ENCODE measurements at regions of chr14 and their contacts with region 1.

Region 1: DNA sequence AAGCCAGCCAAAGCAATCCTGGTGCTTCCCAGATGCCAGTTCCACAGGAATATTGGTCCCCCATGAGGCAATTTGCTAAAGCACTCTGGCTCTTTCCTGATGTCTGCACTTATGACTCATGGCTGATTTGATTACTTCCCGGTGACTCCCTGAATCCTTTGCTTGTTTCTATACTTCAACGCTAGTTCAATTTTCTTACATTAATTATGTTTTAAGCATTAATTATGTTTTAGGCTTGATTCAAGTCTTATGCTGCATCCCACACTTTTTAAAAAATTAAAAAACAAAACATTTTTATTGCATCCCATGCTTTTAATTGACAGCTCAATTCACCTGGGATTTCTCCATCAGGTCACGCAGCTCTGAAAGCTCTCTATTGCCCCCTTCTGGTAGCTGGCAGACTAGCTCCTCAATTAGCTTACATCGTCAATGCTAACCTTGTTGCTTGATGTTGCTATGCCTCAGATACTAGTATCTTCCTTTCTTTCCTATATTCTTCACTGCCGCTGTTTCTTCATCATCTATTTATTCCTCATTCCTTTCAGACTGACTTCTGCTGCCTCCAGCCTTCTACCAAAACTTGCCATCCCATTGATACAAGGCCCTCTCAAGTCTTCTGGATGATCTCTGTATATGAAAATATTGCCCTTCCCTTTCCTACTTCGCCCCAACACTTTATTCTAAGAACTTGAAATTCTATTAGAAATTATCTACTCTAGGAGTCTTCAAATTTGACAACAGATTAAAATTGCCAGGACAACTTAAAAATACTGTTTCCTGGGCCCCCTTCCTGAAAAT is 32.0 kb downstream of the TSHR start:
- DNase-seq: peak; percentile 74
- ATAC-seq: peak; percentile 34
- H3K4me3 Mint-ChIP-seq: no peak overlapping the region
- H3K27ac Mint-ChIP-seq: no peak overlapping the region
- H3K4me1 Mint-ChIP-seq: no peaks in the 10 kb centered on the region
- H3K27me3 Mint-ChIP-seq: peaks cover 9% of the 10 kb centered on the region

Region 2: DNA sequence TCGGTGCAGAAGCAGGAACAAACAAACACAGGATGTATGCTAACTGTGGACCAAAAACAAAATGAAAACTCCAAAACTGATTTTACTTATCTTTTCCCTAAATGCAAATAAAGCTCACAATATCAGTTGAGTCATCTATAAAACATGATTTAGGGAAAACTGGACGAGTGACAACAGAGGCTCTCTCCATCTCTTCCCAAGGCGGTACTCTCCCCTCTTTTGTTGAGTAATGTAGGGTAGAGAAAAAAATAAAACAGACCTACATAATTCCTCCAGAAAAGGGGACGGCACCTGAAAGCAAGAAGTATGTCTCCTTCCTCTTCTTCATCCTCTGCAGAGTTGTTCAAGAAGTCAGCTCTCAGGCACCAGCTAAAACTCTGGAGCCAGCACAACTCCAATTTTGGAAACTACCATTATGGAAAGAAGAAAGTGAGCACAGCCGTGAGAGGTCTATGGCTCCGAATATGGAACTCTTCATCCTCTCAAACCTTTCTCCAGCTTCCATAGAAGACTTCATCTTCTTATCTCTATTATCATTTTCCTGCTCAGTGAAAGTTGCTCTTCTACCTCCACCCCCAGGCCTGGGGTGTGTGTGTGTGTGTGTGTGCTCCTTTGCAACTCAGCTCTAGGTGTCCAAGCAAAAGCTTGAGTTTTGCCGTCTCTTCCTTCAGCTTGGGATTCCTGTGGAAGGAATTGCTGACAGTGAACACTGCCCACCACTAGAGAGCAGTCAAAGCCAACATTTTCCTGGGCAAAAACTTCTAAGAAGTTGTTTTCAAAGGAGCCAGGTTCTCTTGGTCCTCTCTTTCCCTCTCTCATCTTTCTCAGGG is 931.6 kb before region 1 on chr14:
- CTCF ChIA-PET with region 1: interaction called, 3 read pairs
- POLR2A ChIA-PET with region 1: no interaction called
- intact Hi-C with region 1: loop called in 1 of 2 experiments (anchors 1 kb)
- DNase-seq: peak; percentile 6
- ATAC-seq: no peak
- H3K4me3 Mint-ChIP-seq: no peak overlapping the region
- H3K27ac Mint-ChIP-seq: no peak overlapping the region
- H3K4me1 Mint-ChIP-seq: no peaks in the 10 kb centered on the region
- H3K27me3 Mint-ChIP-seq: peaks cover 4% of the 10 kb centered on the region

Region 3: GRCh38 chr14:80587075-80587724 is 400.2 kb before region 1 on chr14:
- CTCF ChIA-PET with region 1: no interaction called
- POLR2A ChIA-PET with region 1: no interaction called
- intact Hi-C with region 1: loop called in 1 of 2 experiments (anchors 1 kb)
- DNase-seq: peak; percentile 18
- ATAC-seq: peak; percentile 92
- H3K4me3 Mint-ChIP-seq: no peak overlapping the region
- H3K27ac Mint-ChIP-seq: peak overlapping the region; percentile 47
- H3K4me1 Mint-ChIP-seq: peaks cover 20% of the 10 kb centered on the region
- H3K27me3 Mint-ChIP-seq: no peaks in the 10 kb centered on the region

Region 4: DNA sequence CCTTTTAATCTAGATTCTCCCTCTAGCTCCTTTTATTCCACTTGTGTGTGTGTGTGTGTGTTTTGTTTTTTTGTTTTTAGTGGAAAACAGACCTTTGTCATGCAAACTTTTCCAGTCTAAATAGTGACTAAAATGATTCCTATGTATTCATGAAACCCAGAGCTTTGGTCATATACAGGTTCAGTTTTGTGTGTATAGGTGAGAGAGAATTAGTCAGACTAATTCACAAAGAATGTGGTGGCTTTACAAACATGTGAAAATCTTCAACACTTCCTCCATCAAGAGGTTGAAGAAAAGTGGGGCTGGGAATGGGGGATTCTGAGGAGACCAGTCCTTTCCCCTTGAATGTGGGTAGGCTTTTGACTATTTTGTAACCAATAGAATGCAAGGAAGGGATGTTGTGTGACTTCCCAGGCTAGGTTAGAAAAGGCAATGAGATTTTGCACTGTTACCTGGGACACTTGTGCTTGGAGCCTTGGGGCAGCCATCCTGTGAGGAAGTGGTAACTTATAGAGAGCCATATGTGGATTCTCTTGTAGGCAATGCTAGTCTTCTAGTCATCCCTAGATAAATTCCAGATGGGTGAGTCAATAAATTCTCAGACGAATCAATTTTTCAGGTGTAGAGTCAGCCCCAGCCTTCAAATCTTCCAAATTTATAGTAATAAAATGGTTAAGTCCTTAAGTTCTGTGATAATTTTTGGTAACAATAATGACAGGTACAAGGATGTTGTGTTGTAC is 282.0 kb before region 1 on chr14:
- CTCF ChIA-PET with region 1: no interaction called
- POLR2A ChIA-PET with region 1: no interaction called
- intact Hi-C with region 1: no loop called
- DNase-seq: no peak
- ATAC-seq: no peak
- H3K4me3 Mint-ChIP-seq: no peak overlapping the region
- H3K27ac Mint-ChIP-seq: no peak overlapping the region
- H3K4me1 Mint-ChIP-seq: no peaks in the 10 kb centered on the region
- H3K27me3 Mint-ChIP-seq: no peaks in the 10 kb centered on the region

Region 5: GRCh38 chr14:80930836-80931389 is 56.5 kb before region 1 on chr14:
- CTCF ChIA-PET with region 1: interaction called, 12 read pairs
- POLR2A ChIA-PET with region 1: interaction called, 4 read pairs
- intact Hi-C with region 1: no loop called
- DNase-seq: peak; percentile 73
- ATAC-seq: peak; percentile 99
- H3K4me3 Mint-ChIP-seq: peak overlapping the region; percentile 50
- H3K27ac Mint-ChIP-seq: peak overlapping the region; percentile 85
- H3K4me1 Mint-ChIP-seq: peaks cover 33% of the 10 kb centered on the region
- H3K27me3 Mint-ChIP-seq: no peaks in the 10 kb centered on the region

Region 6: DNA sequence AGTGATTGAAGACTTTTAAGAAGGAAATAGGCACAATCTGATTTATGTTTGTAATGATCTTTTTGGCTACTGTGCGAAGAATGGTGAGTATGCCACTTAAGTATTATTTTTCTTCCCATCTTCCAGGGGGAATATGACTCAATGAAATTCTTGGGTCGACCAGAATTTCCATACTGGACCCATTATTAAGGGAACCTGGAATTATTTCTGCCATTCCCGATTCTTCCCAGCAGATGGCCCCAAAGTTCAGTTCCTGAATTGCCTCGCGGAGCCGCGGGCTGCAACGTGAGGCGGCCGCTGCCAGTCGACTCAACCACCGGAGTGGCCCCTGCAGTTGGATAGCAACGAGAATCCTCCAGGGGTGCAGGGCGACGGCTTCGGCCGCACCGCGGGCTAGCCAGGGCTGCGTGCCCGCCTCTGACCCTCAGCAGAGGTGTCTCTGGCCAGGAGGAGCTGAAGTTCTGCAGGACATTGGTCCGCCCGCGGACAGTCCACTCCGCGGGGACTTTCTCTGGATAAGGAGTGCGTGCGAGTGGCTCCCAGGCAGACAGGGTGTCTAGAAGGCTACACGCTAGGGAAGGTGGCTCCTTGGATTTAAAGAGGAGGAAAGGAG is 32.6 kb before region 1 on chr14:
- CTCF ChIA-PET with region 1: interaction called, 119 read pairs
- POLR2A ChIA-PET with region 1: interaction called, 6 read pairs
- intact Hi-C with region 1: loop called (anchors 1 kb)
- DNase-seq: peak; percentile 82
- ATAC-seq: peak; percentile 67
- H3K4me3 Mint-ChIP-seq: peak overlapping the region; percentile 75
- H3K27ac Mint-ChIP-seq: peak overlapping the region; percentile 72
- H3K4me1 Mint-ChIP-seq: peaks cover 41% of the 10 kb centered on the region
- H3K27me3 Mint-ChIP-seq: peaks cover 13% of the 10 kb centered on the region

Region 7: DNA sequence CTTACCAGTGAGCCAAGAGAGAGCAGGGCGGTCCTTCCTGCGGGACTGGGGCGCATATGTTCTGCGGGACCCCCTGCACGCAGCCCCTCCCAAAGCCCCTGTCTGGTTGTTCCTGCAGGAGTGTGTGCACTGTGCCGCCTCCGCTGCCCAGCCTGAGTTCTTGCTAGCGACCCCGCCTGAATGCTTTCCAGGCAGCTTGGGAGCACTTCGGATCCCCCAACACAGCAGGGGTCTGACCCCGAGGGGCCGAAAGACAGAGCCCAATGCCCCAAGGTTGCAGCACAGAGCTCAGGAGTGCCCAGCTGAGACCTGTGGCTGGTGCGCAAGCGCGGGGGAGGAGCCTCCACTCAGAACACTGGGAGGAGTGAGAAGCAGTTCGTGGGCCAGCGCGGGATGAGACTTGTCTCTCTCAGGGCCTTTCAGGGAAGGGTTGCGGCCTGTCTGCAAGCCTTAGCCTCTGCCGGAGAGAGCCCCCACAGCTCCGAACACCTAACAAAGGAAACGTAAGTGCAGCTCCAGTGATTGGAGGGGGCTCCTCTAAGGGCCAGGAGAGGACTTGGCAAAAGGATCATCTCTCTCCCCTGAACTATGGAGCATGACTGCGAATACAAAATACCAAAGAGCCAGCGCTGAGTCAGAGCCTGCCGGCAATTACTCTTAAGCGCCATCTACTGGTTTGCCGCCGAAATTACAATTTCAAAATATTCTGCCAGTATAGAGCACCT is 182.8 kb after region 1 on chr14:
- CTCF ChIA-PET with region 1: interaction called, 29 read pairs
- POLR2A ChIA-PET with region 1: no interaction called
- intact Hi-C with region 1: no loop called
- DNase-seq: peak; percentile 94
- ATAC-seq: peak; percentile 98
- H3K4me3 Mint-ChIP-seq: peak overlapping the region; percentile 83
- H3K27ac Mint-ChIP-seq: peak overlapping the region; percentile 92
- H3K4me1 Mint-ChIP-seq: peaks cover 20% of the 10 kb centered on the region
- H3K27me3 Mint-ChIP-seq: no peaks in the 10 kb centered on the region

Measured in activated CD4-positive, alpha-beta T cell treated with anti-CD3 and anti-CD28 coated beads for 36 hours (primary cell).